ENCODE measurements at regions of chr1 and their contacts with region 1.

Region 1: DNA sequence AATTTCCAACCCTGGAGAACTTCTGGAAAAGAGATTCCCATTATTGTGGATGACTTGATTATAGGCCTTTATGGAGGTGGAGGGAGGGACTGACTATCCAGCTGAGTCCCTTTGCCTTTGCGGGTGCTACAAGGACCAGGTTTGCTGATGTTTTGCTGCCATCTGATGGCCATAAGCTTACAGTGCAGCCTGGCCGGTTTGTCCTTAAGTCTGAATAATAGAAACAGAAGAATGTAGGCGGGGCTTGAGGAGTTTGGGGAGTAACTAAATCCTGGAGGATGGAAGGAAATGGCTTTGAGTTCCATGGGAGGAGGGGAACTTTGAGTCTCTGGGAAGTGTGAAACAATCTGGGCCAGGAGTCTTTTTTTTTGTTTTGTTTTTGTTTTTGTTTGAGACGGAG is 55.7 kb upstream of the CD1D start:
- DNase-seq: peak; percentile 82
- CTCF ChIP-seq: peak; percentile 92

Region 2: DNA sequence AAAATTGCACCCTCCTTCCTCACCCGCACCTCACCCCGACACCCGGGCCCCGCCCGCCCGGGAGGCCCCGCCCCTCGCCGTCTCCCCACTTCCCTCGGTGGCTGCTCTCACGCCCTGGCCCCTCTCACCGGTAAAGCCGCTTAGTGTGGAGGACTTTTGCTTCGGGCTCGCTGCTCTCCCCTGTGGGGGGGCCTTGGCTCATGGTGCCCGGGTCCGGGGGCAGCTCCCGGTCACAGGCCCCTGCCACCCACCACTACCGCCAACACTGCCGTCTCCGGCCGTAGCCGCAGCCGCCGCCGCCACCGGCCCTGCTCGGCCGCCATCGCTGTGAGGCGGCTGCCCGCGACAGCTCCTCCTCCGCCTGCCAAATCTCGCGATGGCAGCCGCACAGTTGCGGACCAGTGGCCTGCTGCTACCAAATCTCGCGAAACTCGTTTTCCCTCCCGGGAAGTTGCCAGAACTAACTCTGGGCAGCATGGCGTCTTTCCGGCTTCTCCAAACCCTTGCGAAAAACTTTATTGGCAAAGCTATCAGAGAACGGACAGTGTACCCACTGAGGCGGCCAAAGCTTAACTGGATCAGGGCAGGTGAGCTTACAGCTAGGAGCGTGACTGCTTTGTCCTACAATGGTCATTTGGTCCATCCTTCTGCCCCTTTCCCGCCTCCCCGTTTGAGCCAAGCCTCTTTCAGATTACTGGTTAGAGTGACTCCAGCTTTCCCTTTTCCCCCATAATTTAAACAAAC is 1842.3 kb before region 1 on chr1 and contains the start of gene SMG5:
- in situ Hi-C with region 1: no loop called
- DNase-seq: peak; percentile 96
- CTCF ChIP-seq: no peak

Region 3: GRCh38 chr1:157963713-157964112 is 161.3 kb before region 1 on chr1:
- in situ Hi-C with region 1: loop called (anchors 10 kb)
- DNase-seq: peak; percentile 69
- CTCF ChIP-seq: peak; percentile 90

Measured in GM13977 (cell line).